Activated naive CD8-positive, alpha-beta T cell treated with anti-CD3 and anti-CD28 coated beads, Interleukin-2, amount 10 ng/mL, durations not matched to agents 7 days and 5 days (primary cell): ENCODE measurements at regions of chr1 and their contacts with region 1.

Region 1: DNA sequence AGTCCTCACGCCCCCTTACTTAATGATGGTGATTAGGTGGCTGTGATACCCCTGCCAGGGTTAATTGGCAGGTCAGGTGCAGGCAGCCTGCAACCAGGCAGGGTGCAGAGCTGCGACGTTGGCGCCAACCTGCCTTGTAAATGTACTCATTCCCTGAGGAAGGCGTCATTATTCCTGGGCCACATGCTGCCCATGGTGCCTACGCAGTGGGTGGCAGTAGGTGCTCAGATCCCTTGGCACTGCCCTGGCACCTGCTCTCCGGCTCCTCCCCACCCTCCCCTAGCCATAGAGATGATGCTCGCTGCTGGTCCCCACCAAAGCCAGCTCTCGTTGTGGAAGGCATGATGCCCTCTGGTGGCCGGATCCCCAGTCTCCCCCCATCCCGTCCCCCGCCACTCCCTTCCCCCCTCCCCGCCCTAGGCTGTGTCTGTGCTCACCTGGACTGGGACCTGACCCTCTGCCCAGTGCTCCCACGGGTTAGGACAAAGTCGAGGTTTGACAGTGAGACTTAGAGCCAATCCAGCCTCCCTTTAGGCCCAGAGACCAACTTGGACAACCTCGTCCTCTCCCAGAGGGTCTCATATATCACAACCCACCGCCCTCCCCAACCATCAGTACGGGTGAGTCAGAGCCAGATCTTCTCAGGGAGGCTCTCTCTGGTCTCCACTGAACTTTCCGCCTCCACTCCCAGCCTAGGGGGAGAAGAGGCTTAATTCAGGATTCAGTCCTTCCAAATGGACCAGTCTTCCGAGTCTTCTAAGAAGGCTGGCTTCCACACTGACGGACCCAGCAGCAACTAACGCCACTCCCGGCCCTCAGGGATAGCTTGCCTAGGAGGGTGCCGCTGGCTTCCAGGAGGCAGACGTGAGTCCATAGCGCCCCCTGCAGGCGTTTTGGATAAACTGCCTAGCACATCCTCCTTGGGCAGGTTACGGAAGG is 5.7 kb downstream of the KRTCAP2 start:
- DNase-seq: peak; percentile 87
- ATAC-seq: peak; percentile 76
- H3K4me3 Mint-ChIP-seq: peak overlapping the region; percentile 63
- H3K27ac Mint-ChIP-seq: peak overlapping the region; percentile 54
- H3K4me1 Mint-ChIP-seq: peaks cover 19% of the 10 kb centered on the region
- H3K27me3 Mint-ChIP-seq: no peaks in the 10 kb centered on the region

Region 2: GRCh38 chr1:155091071-155091709 is 76.2 kb before region 1 on chr1:
- POLR2A ChIA-PET with region 1: interaction called, 21 read pairs
- DNase-seq: peak; percentile 88
- ATAC-seq: peak; percentile 68
- H3K4me3 Mint-ChIP-seq: no peak overlapping the region
- H3K27ac Mint-ChIP-seq: no peak overlapping the region
- H3K4me1 Mint-ChIP-seq: peaks cover 3% of the 10 kb centered on the region
- H3K27me3 Mint-ChIP-seq: peaks cover 19% of the 10 kb centered on the region